Activated CD4-positive, alpha-beta T cell treated with anti-CD3 and anti-CD28 coated beads, Interleukin-2, amount 10 ng/mL, durations not matched to agents 24 days and 14 days (primary cell): ENCODE measurements at regions of chr3 and their contacts with region 1.

Region 1: DNA sequence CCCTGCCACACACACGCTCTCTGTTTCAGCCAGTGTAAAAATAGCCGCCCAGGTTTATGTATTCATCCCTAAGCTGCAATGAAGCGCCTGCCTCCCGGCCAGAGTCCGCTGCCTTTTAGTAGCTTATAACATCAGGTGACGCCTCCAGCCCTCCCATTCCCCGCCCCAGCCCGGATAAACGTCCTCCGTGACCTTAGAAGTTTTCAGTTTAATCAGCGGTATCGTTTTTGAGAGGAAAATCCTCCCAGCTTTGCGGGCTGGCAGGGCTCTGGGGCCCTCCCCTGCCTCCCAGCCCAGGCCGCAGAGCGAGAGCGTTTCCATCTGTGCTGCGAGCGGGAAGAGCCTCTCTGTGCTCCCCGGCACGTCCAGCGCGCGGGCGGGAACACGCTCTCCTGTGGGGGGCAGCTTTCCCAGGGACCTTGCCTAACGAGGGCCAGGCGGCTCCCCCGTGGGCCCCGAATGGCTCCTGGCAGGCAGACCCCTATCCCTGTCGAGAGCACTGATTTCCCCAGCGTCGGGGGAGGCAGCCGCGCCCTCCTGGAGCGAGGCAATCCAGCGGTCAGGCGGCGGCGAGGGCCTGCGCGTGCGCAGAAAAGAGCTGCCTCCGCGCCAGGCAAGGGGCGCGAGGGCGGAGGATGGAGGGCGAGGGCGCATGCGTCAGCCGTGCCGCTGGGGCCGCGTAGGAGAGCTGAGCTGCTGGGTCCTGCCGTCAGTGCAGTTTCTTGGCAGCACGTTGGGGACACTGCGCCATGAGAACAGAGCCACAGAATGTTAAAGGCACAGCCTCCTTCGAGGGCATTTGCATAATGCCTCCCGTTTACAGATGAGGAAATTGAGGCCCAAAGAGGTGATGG is 71.1 kb downstream of the CCNL1 start:
- DNase-seq: peak; percentile 98
- H3K4me3 Mint-ChIP-seq: peak overlapping the region; percentile 75
- H3K27ac Mint-ChIP-seq: peak overlapping the region; percentile 93
- H3K4me1 Mint-ChIP-seq: peaks cover 71% of the 10 kb centered on the region
- H3K27me3 Mint-ChIP-seq: no peaks in the 10 kb centered on the region

Region 2: GRCh38 chr3:155854141-155854940 is 1234.5 kb before region 1 on chr3 and contains the start of gene SLC33A1:
- intact Hi-C with region 1: loop called (anchors 5 kb)
- DNase-seq: peak; percentile 99
- H3K4me3 Mint-ChIP-seq: peak within 1 kb of the TSS; percentile 97
- H3K27ac Mint-ChIP-seq: peak within 1 kb of the TSS; percentile 98
- H3K4me1 Mint-ChIP-seq: peaks cover 31% of the 10 kb centered on the region
- H3K27me3 Mint-ChIP-seq: peaks cover 2% of the 10 kb centered on the region
- total RNA-seq, gene SLC33A1: 27.4 and 28.0 TPM in 2 replicates

Region 3: DNA sequence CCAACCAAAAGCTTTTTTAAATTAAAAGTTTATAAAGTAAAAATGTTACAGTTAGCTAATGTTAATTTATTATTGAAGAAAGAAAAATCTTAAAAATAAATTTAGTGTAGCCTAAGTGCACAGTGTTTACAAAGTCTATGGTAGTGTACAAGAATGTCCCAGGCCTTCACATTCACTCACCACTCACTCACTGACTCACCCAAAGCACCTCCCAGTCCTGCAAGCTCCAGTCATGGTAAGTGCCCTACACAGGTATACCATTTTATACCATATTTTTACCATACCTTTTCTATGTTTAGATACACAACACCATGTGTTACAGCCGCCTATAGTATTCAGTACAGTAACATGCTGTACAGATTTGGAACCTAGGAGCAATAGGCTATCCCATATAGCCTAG is 563.0 kb before region 1 on chr3:
- intact Hi-C with region 1: loop called (anchors 5 kb)
- DNase-seq: no peak
- H3K4me3 Mint-ChIP-seq: no peak overlapping the region
- H3K27ac Mint-ChIP-seq: no peak overlapping the region
- H3K4me1 Mint-ChIP-seq: peaks cover 16% of the 10 kb centered on the region
- H3K27me3 Mint-ChIP-seq: peaks cover 40% of the 10 kb centered on the region

Region 4: DNA sequence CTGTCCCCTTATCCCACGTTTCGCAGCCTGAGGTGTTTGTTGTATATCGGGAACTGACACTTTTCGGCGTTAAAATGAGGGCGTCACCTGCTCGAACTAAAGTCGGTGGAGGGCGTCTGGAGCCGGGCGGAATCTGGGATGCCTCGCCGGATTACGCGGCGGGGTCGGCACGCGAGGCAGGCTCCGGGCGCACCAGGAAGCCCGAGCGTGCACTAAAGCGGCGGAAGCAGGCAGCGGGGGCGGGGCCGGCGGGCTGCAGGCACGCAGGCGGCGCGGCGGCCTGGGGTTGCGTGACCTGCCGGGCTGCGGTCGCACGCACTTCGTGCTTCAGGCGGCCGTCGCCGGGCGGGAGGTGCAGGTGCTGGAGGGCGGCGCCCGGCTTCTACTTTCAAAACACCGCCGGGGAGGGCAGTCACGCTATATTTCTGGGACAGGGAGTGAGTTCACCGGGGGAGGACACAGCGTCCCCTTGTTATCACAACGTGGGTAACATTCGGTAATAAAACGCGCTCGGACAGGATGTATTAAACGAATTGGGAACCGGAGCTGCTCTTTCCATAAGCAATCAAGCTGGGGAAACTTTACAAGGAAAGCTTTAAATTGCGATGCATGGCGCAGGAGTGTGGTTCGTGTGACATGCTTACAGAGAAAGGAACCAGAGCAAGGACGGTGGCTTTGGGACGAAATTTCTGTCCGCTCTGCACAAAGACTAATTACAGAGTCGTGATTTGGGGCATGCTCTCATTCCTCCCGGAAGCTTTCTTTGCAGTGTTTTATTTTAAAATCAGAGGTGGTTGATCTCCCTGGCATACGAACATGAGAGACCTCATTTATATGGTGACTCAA is 271.8 kb before region 1 on chr3:
- intact Hi-C with region 1: loop called (anchors 2 kb)
- DNase-seq: peak; percentile 97
- H3K4me3 Mint-ChIP-seq: peak overlapping the region; percentile 92
- H3K27ac Mint-ChIP-seq: peak overlapping the region; percentile 98
- H3K4me1 Mint-ChIP-seq: peaks cover 52% of the 10 kb centered on the region
- H3K27me3 Mint-ChIP-seq: no peaks in the 10 kb centered on the region

Region 5: DNA sequence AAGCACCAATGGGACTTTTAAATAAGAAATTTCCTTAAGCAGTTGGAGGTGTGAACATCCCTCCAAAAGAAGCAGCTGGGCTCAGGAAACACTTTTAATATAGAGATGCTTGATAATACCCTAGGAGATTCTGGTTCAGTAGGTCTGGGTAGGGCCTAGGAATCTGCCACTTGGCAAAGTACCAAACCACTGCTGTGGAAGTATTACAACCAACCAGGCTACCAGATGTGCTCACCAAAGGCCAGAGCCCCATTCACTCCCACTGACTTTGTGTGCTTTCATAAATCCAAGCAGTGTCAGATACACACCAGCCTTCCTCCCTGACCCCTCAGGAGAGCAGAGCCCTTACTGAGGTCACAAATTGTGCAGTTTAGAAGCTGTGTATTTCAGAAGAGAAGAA is 91.5 kb before region 1 on chr3:
- intact Hi-C with region 1: no loop called
- DNase-seq: no peak
- H3K4me3 Mint-ChIP-seq: no peak overlapping the region
- H3K27ac Mint-ChIP-seq: no peak overlapping the region
- H3K4me1 Mint-ChIP-seq: no peaks in the 10 kb centered on the region
- H3K27me3 Mint-ChIP-seq: peaks cover 35% of the 10 kb centered on the region

Region 6: DNA sequence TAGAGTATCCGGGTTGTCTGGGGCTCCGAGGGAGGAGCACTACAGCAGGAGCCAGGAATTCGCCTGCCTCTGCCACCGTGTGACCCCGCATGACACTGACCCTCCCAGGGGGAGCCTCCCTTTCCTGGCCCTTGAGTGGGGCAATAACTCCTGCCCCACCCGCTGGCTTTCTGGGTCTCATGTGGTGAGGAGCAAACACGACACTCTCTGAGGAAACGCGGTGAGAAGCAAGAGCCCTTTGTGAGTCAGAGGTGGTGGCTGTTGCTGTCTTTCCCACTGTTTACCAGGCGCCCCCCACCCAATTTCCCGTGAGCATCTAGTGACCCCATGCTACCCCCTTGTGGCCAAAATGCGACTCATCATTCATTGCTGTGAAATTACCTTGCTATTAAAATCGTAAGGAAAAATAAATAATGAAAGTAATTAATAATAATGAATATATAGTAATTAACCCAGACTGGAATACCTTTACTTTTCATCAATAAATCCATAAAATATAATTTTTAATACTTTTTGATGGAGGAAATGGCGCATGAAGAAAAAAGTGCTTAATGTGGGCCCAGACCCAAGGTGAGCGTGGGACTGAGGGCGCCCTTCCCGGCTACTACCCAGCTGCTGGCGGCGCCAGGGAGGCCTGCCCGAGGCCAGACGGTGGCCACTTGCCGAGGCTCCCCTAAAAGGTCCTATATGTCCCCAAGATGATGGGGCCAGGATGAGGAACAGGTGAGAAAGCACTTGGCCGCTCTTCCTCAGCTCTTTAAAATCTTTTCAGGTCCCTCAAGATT is 41.8 kb after region 1 on chr3:
- intact Hi-C with region 1: loop called (anchors 1 kb)
- DNase-seq: peak; percentile 91
- H3K4me3 Mint-ChIP-seq: peak overlapping the region; percentile 78
- H3K27ac Mint-ChIP-seq: peak overlapping the region; percentile 98
- H3K4me1 Mint-ChIP-seq: peaks cover 82% of the 10 kb centered on the region
- H3K27me3 Mint-ChIP-seq: no peaks in the 10 kb centered on the region